Naive thymus-derived CD4-positive, alpha-beta T cell (primary cell): ENCODE measurements at regions of chr9 and their contacts with region 1.

Region 1: DNA sequence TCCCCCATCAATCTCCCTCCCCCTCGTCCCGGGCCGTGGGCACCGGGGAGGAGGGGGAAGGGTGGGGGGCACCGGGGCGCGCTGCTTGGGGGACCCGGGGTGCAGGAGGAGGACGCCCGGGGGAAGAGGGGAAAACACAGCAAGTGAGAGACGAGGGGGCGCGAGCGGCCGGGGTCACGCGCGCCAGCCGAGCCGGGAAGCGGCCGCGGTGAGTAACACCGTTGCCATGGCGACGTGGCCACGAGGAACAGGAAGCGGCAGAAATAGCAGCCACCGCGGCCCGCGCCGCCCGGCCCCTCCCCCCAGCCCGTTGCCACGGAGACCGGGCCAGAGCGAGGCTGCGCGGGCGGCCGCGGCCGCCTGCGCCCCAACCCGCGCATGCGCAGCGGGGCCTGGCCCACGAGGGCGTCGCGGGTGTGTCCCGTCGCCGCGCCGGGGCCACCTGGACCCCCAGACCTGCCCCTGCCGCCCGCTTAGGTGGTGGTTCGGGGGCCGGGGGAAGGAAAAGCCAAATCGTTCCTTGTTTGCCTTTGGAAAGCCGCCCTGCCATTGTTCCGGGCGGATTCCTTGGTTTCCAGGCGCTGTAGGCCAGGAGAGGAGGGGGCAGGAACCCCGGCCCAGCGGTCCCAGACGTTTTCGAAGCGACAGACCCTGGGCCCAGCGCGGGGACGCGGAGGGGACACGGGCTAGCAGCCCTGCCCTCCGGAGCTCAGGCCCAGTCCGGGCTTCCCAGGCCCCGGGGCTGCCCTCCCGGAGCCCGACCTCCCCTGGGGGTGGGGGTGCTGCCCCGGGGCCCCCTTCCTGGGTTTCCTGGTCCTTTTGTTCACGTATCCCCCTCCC is 207.1 kb downstream of the C9orf50 start:
- DNase-seq: peak; percentile 95 to 100 (median 98)
- ATAC-seq: peak; percentile 89
- H3K4me3 ChIP-seq: peak overlapping the region; percentile 76
- H3K4me3 Mint-ChIP-seq: peak overlapping the region; percentile 84 to 94 (median 90)
- H3K27ac ChIP-seq: peak overlapping the region; percentile 100
- H3K27ac Mint-ChIP-seq: peak overlapping the region; percentile 95 to 100 (median 99)
- H3K4me1 ChIP-seq: peaks cover 17 to 20% of the 10 kb centered on the region in 2 donors
- H3K4me1 Mint-ChIP-seq: peaks cover 5 to 43% (median 33%) of the 10 kb centered on the region in 7 donors
- H3K27me3 ChIP-seq: no peaks in the 10 kb centered on the region
- H3K27me3 Mint-ChIP-seq: peaks cover 0 to 2% (median 0%) of the 10 kb centered on the region in 5 donors

Region 2: DNA sequence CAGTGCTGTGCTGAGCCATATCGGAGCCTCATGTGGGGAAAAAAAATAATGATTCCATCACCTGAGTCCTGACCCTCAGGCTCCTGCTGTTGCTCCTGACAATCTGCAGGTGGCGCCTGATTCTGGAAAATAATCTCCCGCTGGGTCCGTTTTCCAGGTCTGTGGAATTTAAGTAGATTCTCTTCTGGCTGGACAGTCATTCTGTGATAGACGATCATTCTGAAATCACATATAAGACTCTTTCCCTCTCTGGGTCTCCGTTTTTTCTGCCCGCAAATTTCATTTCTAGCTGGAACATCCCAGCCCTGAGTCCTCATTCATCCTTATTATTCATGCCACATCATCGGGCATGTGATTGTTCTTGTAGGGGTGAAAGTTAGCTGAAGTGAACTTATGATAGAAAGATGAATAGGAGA is 1823.8 kb before region 1 on chr9:
- CTCF ChIA-PET with region 1: no interaction called
- POLR2A ChIA-PET with region 1: no interaction called
- intact Hi-C with region 1: no loop called
- DNase-seq: peak in 3 of 9 donors; percentile 25 to 36 (median 30)
- ATAC-seq: peak; percentile 57
- H3K4me3 ChIP-seq: no peak overlapping the region
- H3K4me3 Mint-ChIP-seq: no peak overlapping the region
- H3K27ac ChIP-seq: no peak overlapping the region
- H3K27ac Mint-ChIP-seq: no peak overlapping the region
- H3K4me1 ChIP-seq: no peaks in the 10 kb centered on the region
- H3K4me1 Mint-ChIP-seq: peaks cover 0 to 9% (median 0%) of the 10 kb centered on the region in 7 donors
- H3K27me3 ChIP-seq: no peaks in the 10 kb centered on the region
- H3K27me3 Mint-ChIP-seq: peaks cover 0 to 22% (median 5%) of the 10 kb centered on the region in 5 donors

Region 3: GRCh38 chr9:129237195-129237611 is 176.6 kb before region 1 on chr9:
- CTCF ChIA-PET with region 1: no interaction called
- POLR2A ChIA-PET with region 1: interaction called, 3 read pairs
- intact Hi-C with region 1: loop called in 1 of 2 experiments (anchors 1 kb)
- DNase-seq: peak in 8 of 9 donors; percentile 12 to 61 (median 38)
- ATAC-seq: peak; percentile 45
- H3K4me3 ChIP-seq: peak overlapping the region; percentile 66
- H3K4me3 Mint-ChIP-seq: peak overlapping the region; percentile 87 to 97 (median 92)
- H3K27ac ChIP-seq: peak overlapping the region; percentile 77
- H3K27ac Mint-ChIP-seq: peak overlapping the region; percentile 85 to 98 (median 95)
- H3K4me1 ChIP-seq: peaks cover 35 to 36% of the 10 kb centered on the region in 2 donors
- H3K4me1 Mint-ChIP-seq: peaks cover 38 to 77% (median 71%) of the 10 kb centered on the region in 7 donors
- H3K27me3 ChIP-seq: no peaks in the 10 kb centered on the region
- H3K27me3 Mint-ChIP-seq: no peaks in the 10 kb centered on the region

Region 4: DNA sequence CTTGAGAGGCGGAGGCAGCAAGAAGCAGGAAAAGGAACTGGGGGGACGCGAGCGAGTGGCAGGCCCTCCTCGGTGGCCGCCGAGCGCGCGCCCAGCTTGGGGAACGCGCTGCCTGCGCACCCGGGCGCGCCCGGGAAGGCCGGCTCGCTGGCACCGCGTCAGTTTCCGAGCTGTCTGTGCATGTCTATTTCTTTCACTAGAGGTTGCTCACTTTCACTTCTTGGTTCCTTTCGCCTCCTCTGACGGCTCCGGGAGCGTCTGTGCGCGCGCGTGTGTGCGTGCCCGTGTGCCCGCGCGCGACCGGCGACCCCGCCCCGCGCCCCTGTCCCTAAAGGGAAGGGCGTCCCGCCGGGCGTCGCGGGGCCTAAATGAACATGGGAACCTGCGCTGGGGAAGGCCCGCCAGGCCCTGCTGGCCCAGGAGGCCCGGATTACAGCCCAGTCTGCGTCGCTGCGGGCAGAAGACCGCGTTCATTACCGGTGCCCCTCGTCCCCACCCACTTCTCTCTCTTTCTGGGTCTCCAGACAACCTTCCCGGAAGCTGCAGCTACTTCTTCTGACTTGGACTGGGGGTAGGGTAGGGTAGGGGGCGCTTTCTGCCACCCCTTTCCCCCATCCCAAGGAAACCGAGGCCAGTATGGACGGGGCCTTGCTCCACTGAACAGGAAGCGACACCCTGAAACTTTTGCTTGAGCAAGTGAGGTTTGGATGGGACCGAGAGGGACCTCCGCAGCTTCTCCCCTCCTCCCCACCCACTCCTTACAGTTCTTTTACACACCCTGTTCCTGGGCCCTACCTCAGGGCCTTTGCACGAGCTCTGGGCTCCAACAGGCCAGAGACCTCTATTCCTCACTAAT is 30.0 kb before region 1 on chr9:
- CTCF ChIA-PET with region 1: no interaction called
- POLR2A ChIA-PET with region 1: interaction called, 11 read pairs
- intact Hi-C with region 1: loop called (anchors 1 kb)
- DNase-seq: peak; percentile 60 to 87 (median 79)
- ATAC-seq: peak; percentile 96
- H3K4me3 ChIP-seq: peak overlapping the region; percentile 62
- H3K4me3 Mint-ChIP-seq: peak overlapping the region; percentile 70 to 86 (median 82)
- H3K27ac ChIP-seq: peak overlapping the region; percentile 82
- H3K27ac Mint-ChIP-seq: peak overlapping the region; percentile 72 to 96 (median 92)
- H3K4me1 ChIP-seq: peaks cover 0 to 12% of the 10 kb centered on the region in 2 donors
- H3K4me1 Mint-ChIP-seq: peaks cover 8 to 19% (median 10%) of the 10 kb centered on the region in 7 donors
- H3K27me3 ChIP-seq: no peaks in the 10 kb centered on the region
- H3K27me3 Mint-ChIP-seq: peaks cover 0 to 9% (median 0%) of the 10 kb centered on the region in 5 donors

Region 5: DNA sequence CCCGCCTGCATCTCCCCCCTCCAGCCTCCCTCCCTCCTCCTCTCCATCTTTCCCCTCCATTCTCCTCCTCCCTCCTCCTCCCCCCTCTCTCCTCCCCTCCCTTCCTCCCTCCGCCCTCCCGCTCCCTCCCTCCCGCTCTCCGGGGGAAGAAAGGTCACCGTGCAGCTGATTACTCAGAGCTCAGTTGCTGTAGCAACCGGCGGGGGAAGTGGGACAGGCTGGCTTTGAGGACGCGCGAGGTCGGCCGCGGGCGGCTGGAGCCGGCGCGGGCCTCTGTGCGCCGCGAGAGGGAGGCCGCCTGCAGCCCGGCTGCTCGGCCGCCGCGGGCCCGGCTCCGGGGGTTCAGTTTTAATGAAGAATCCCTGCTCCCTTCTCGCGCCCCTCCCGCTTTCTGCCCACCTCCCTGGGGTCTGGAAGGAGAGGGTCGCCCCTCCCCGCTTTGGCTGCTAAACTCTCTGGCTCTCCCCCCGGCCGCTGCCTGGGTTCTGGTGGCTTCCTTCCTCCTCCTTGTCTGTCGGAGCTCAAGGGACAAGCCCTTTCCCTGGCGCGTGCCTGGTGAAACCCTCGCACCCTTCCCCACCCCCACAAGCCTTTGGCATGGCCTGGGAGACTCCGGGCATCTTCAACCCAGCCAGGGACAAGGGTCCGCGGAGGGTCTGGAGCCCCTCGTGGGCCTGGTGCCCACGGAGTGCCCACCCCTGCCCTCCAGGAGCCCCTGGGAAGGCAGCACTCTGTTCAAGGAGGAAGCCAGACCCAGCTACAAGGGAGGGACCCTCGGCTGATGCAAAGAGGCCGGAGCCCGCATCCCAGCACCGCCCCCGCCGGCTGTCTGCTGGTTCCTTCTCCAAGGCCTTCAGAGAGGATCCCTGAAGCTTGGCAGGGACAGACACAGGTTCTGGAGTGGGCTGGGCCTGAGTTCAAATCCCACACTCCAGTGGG is 46.8 kb after region 1 on chr9:
- CTCF ChIA-PET with region 1: no interaction called
- POLR2A ChIA-PET with region 1: interaction called, 15 read pairs
- intact Hi-C with region 1: loop called (anchors 1 kb)
- DNase-seq: peak; percentile 42 to 86 (median 64)
- ATAC-seq: peak; percentile 86
- H3K4me3 ChIP-seq: peak overlapping the region; percentile 25
- H3K4me3 Mint-ChIP-seq: peak overlapping the region; percentile 67 to 89 (median 80)
- H3K27ac ChIP-seq: peak overlapping the region; percentile 68
- H3K27ac Mint-ChIP-seq: peak overlapping the region in 8 of 9 donors; percentile 51 to 96 (median 78)
- H3K4me1 ChIP-seq: peaks cover 32 to 35% of the 10 kb centered on the region in 2 donors
- H3K4me1 Mint-ChIP-seq: peaks cover 16 to 46% (median 41%) of the 10 kb centered on the region in 7 donors
- H3K27me3 ChIP-seq: no peaks in the 10 kb centered on the region
- H3K27me3 Mint-ChIP-seq: peaks cover 0 to 9% (median 0%) of the 10 kb centered on the region in 5 donors

Region 6: GRCh38 chr9:129584136-129584535 is 170.4 kb after region 1 on chr9:
- CTCF ChIA-PET with region 1: no interaction called
- POLR2A ChIA-PET with region 1: no interaction called
- intact Hi-C with region 1: loop called (anchors 1 kb)
- DNase-seq: peak in 8 of 9 donors; percentile 51 to 69 (median 62)
- ATAC-seq: peak; percentile 88
- H3K4me3 ChIP-seq: no peak overlapping the region
- H3K4me3 Mint-ChIP-seq: peak overlapping the region in 7 of 10 donors; percentile 4 to 65 (median 31)
- H3K27ac ChIP-seq: peak overlapping the region; percentile 30
- H3K27ac Mint-ChIP-seq: peak overlapping the region; percentile 43 to 92 (median 76)
- H3K4me1 ChIP-seq: peaks cover 25 to 26% of the 10 kb centered on the region in 2 donors
- H3K4me1 Mint-ChIP-seq: peaks cover 15 to 88% (median 53%) of the 10 kb centered on the region in 7 donors
- H3K27me3 ChIP-seq: no peaks in the 10 kb centered on the region
- H3K27me3 Mint-ChIP-seq: no peaks in the 10 kb centered on the region